SK-N-SH (cell line): ENCODE measurements at regions of chr3 and their contacts with region 1.

Region 1: GRCh38 chr3:194333212-194333980 is 17.7 kb downstream of the CPN2 start:
- DNase-seq: peak; percentile 90
- H3K4me3 ChIP-seq: peak overlapping the region; percentile 53 to 59
- H3K27ac ChIP-seq: no peak overlapping the region
- H3K4me1 ChIP-seq: peaks cover 5 to 35% of the 10 kb centered on the region in 2 experiments; a peak in 2 of 4 replicates
- H3K27me3 ChIP-seq: no peaks in the 10 kb centered on the region
- CTCF ChIP-seq: peak; percentile 95
- EP300 ChIP-seq: no peak
- RAD21 ChIP-seq: peak; percentile 98

Region 2: GRCh38 chr3:194089357-194090177 is 243.8 kb before region 1 on chr3:
- CTCF ChIA-PET with region 1: no interaction called
- POLR2A ChIA-PET with region 1: no interaction called
- DNase-seq: no peak
- H3K4me3 ChIP-seq: no peak overlapping the region
- H3K27ac ChIP-seq: no peak overlapping the region
- H3K4me1 ChIP-seq: peaks cover 7 to 8% of the 10 kb centered on the region in 2 experiments; a peak in 2 of 4 replicates
- H3K27me3 ChIP-seq: 0 out of 2 replicates have a peak, but pooled peaks cover 3% of the 10 kb centered on the region
- CTCF ChIP-seq: no peak
- EP300 ChIP-seq: peak in 1 of 2 experiments; percentile 63; a peak in 1 of 4 replicates
- RAD21 ChIP-seq: no peak

Region 3: DNA sequence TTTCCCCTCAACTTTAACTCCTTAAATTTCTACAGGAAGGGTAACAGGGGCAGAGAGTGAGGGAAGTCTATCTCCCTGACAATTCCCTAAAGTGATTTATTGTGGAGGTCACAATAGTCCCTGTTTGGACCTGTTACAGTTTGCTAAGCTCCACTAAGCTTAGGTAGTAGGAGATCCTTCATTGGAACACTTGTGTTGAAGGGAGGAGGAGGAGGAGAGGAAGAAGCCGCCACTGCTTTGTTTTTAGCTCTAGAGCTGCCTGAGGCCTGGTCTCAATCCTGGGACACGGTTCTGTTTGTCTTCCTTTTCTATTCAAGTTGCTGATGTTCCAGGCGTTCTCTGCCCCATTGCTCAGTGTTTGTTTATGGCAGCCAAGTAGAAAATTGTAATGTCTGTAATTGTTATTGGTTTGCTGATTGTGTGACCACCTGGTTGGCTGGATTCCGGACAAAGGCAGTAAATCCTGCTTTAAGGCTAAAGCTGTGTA is 149.1 kb before region 1 on chr3:
- CTCF ChIA-PET with region 1: no interaction called
- POLR2A ChIA-PET with region 1: no interaction called
- DNase-seq: no peak
- H3K4me3 ChIP-seq: no peak overlapping the region
- H3K27ac ChIP-seq: no peak overlapping the region
- H3K4me1 ChIP-seq: peaks cover 0 to 12% of the 10 kb centered on the region in 2 experiments; a peak in 2 of 4 replicates
- H3K27me3 ChIP-seq: no peaks in the 10 kb centered on the region
- CTCF ChIP-seq: no peak
- EP300 ChIP-seq: no peak
- RAD21 ChIP-seq: no peak

Region 4: GRCh38 chr3:194351952-194352536 is 18.6 kb after region 1 on chr3:
- CTCF ChIA-PET with region 1: interaction called, 62 read pairs
- POLR2A ChIA-PET with region 1: interaction called, 3 read pairs
- DNase-seq: no peak
- H3K4me3 ChIP-seq: no peak overlapping the region
- H3K27ac ChIP-seq: no peak overlapping the region
- H3K4me1 ChIP-seq: peaks cover 4 to 5% of the 10 kb centered on the region in 2 experiments; a peak in 2 of 4 replicates
- H3K27me3 ChIP-seq: no peaks in the 10 kb centered on the region
- CTCF ChIP-seq: no peak
- EP300 ChIP-seq: no peak
- RAD21 ChIP-seq: no peak

Region 5: GRCh38 chr3:194395778-194396547 is 62.6 kb after region 1 on chr3:
- CTCF ChIA-PET with region 1: interaction called, 326 read pairs
- POLR2A ChIA-PET with region 1: no interaction called
- DNase-seq: no peak
- H3K4me3 ChIP-seq: no peak overlapping the region
- H3K27ac ChIP-seq: no peak overlapping the region
- H3K4me1 ChIP-seq: no peaks in the 10 kb centered on the region; a peak in 1 of 4 replicates
- H3K27me3 ChIP-seq: no peaks in the 10 kb centered on the region
- CTCF ChIP-seq: no peak
- EP300 ChIP-seq: no peak
- RAD21 ChIP-seq: no peak

Region 6: DNA sequence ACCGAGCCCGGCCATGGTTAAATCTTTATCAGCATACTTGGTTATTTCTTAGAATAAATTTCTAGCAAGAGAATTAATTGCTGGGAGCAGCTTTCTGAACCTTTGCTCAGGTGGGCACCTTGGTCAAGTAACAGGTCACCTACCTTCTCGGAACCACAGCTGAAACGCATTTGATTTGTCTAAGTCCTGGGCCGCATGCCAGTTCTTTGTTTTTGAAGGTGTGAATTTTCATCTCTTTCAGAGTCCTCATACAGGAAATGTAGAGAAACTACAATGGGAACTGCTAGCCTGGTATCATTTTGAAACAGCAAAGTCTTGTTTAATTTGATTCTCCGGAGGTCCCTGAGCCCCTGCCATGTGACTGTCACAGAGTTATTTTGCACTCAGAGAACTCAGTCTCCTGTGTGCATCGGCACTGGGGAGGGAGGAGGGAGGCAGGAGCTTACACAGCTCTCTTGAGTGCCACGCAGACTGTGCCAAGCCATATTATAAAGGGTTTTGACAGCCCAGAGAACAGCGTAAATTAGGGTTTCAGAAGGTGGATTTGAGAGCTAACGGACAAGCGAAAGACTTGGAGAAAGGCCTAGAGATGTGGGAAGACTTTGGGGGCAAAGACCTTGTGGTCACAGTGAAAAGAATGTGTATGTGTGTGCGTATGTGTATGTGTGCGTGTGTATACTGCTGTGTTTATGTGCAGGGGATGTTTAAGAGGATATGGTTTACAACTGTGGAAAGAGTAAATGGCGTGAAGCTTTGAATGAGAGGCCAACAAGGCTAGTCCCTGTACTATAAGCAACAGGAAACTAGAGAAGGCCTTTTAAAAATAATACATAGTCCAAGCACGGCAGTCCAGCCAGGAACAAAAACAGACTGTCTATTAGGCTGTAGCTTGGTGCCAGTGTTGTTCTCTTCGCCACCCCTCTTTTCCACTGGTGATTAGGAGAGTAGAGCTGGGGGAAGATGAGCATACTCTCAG is 215.2 kb after region 1 on chr3:
- CTCF ChIA-PET with region 1: no interaction called
- POLR2A ChIA-PET with region 1: no interaction called
- DNase-seq: no peak
- H3K4me3 ChIP-seq: no peak overlapping the region
- H3K27ac ChIP-seq: no peak overlapping the region
- H3K4me1 ChIP-seq: peaks cover 0 to 7% of the 10 kb centered on the region in 2 experiments; a peak in 1 of 4 replicates
- H3K27me3 ChIP-seq: no peaks in the 10 kb centered on the region
- CTCF ChIP-seq: no peak
- EP300 ChIP-seq: no peak
- RAD21 ChIP-seq: no peak

Region 7: DNA sequence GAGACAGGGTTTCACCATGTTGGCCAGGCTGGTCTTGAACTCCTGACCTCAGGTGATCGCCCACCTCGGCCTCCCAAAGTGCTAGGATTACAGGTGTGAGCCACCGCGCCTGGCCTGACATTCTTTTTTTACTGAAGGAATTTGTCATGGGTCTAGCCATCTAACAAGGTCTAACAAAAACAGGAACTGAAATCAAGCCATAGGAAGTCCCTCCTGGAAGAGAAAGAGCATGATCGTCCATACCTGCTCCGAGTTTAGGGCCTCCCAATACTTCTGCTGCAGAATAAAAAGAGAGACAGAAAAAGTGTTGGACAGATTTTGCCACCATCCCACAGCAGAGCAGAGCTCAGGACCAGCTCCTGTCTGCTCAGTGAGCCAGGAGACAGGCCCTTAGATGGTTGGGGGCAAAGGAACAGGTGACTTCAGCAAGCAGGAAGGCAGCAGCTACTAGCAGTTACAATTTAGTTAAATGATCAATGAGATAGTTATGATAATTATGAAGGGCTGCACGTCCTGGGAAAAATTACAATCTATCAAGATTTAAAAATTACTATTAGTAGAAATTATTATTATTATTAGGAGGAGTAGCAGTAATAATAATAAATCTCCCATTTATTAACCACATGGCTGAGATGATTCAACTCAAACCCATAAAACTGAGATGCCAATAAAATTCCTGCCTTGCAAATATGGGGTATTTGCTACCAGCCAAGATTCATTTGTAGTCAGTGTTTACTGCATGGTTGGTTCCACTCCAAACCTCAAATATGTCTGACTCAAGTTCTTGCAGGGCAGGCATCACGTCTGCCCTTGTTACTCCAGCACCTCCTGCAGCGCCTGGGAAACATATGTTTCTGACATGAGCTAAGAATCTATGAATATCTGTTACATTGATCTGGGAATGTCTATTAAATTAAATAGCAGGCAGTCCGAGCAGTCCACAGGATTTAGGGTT is 259.7 kb after region 1 on chr3:
- CTCF ChIA-PET with region 1: interaction called, 12 read pairs
- POLR2A ChIA-PET with region 1: no interaction called
- DNase-seq: peak; percentile 68
- H3K4me3 ChIP-seq: no peak overlapping the region
- H3K27ac ChIP-seq: peak overlapping the region in 1 of 2 experiments; percentile 94; a peak in 2 of 4 replicates
- H3K4me1 ChIP-seq: peaks cover 8 to 14% of the 10 kb centered on the region in 2 experiments; a peak in 2 of 4 replicates
- H3K27me3 ChIP-seq: no peaks in the 10 kb centered on the region
- CTCF ChIP-seq: no peak; the same call in 1 of the 2 replicates
- EP300 ChIP-seq: peak; percentile 65 to 99
- RAD21 ChIP-seq: peak; percentile 15; the same call in 1 of the 2 replicates